ENCODE measurements at regions of chr3 and their contacts with region 1.

Region 1: GRCh38 chr3:49867871-49868321 is 1.8 kb downstream of the CAMKV start:
- DNase-seq: peak; percentile 18
- H3K4me3 ChIP-seq: no peak overlapping the region
- CTCF ChIP-seq: no peak

Region 2: DNA sequence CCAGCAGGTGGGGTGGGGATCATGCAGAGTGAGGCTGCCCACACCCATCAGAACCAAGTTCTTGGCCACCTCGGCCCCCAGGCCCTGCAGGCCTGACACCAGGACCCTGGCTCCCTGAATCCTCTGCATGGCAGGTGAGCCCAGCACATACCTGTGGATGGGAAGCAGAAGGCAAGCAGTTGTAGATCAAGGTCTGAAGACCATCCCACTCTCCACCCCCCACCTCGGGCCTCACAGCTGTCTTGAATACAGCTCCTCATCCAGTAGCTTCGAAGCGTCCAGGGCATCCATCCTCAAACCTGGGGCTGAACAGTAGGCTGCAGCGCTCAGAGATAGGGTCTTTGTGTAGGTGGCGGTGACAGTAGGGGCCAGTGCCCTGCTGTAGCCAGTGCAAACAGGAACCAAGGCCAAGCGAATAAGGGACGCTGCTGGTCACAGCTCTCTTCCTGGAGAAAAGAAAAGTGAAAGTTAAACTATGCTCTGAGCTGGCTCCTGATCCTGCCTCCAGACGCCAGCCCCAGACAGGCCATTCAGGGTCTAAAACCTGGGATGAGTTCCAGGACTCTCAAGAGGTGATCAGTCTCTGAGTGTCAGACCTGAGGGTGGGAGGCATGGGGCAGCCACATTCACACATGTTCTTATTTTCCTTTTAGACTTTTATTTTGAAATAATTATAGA is 54.3 kb before region 1 on chr3 and contains the start of gene UBA7:
- in situ Hi-C with region 1: no loop called
- DNase-seq: peak; percentile 82
- H3K4me3 ChIP-seq: peak within 1 kb of the TSS; percentile 43
- CTCF ChIP-seq: no peak

Region 3: GRCh38 chr3:49966230-49966942 is 98.5 kb after region 1 on chr3:
- in situ Hi-C with region 1: loop called (anchors 5 kb)
- DNase-seq: no peak
- H3K4me3 ChIP-seq: no peak overlapping the region
- CTCF ChIP-seq: no peak